Left ventricle myocardium inferior (tissue), 1 donor: ENCODE measurements at regions of chr6 and their contacts with region 1.

Region 1: DNA sequence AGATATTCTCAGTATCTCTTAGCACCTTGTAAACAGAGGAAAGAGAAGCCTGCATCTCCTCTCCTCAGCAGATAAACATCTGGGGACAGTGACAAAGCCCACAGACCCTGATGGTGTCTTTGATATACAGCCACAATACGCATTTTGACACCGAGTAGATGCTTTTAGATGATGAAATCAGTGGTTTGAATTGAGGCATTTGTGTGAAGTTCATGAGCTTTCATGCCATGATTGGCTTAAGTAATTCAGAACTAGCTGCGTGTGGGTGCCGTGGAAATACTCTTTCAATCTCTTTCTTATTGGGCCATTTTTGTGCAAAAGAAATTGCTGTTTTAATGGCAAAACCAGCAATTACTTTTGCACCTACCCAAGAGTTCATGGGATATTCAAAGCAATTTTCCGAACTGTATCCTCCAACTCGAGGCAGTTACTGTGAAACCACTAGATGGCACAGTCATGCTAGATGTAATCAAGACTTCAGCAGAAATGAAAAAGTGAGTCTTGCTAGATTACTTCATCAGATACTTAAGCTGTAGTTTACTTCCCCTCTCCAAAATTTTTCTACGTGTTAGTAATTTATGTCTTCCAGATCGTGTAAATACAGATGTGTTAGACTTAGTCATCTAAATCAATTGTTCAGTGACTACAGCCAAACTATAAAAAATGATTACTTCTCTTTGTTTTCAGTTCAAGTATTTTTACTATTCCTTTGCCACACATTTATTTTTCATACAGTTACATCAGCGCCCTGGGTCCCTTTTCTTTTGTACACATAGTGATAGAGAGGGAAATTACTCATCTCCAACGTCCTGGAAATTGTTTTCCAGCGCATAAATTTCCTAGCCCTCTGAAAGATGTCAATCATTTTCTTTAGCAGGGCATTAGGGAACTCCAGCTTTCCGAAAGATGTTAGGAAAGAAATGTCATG is 49.4 kb downstream of the IYD start:
- DNase-seq: no peak
- H3K4me3 ChIP-seq: peak overlapping the region; percentile 62
- H3K27ac ChIP-seq: peak overlapping the region; percentile 76
- H3K4me1 ChIP-seq: peaks cover 15% of the 10 kb centered on the region
- H3K27me3 ChIP-seq: no peaks in the 10 kb centered on the region
- CTCF ChIP-seq: peak; percentile 90

Region 2: GRCh38 chr6:150685860-150686259 is 267.7 kb after region 1 on chr6:
- intact Hi-C with region 1: no loop called
- DNase-seq: no peak
- H3K4me3 ChIP-seq: peak overlapping the region; percentile 63
- H3K27ac ChIP-seq: peak overlapping the region; percentile 85
- H3K4me1 ChIP-seq: peaks cover 57% of the 10 kb centered on the region
- H3K27me3 ChIP-seq: no peaks in the 10 kb centered on the region
- CTCF ChIP-seq: peak; percentile 66

Region 3: GRCh38 chr6:150813319-150813992 is 395.3 kb after region 1 on chr6:
- intact Hi-C with region 1: loop called (anchors 2 kb)
- DNase-seq: no peak
- H3K4me3 ChIP-seq: no peak overlapping the region
- H3K27ac ChIP-seq: peak overlapping the region; percentile 76
- H3K4me1 ChIP-seq: peaks cover 43% of the 10 kb centered on the region
- H3K27me3 ChIP-seq: no peaks in the 10 kb centered on the region
- CTCF ChIP-seq: no peak